Activated CD4-positive, alpha-beta memory T cell treated with anti-CD3 and anti-CD28 coated beads for 36 hours (primary cell): ENCODE measurements at regions of chr6 and their contacts with region 1.

Region 1: DNA sequence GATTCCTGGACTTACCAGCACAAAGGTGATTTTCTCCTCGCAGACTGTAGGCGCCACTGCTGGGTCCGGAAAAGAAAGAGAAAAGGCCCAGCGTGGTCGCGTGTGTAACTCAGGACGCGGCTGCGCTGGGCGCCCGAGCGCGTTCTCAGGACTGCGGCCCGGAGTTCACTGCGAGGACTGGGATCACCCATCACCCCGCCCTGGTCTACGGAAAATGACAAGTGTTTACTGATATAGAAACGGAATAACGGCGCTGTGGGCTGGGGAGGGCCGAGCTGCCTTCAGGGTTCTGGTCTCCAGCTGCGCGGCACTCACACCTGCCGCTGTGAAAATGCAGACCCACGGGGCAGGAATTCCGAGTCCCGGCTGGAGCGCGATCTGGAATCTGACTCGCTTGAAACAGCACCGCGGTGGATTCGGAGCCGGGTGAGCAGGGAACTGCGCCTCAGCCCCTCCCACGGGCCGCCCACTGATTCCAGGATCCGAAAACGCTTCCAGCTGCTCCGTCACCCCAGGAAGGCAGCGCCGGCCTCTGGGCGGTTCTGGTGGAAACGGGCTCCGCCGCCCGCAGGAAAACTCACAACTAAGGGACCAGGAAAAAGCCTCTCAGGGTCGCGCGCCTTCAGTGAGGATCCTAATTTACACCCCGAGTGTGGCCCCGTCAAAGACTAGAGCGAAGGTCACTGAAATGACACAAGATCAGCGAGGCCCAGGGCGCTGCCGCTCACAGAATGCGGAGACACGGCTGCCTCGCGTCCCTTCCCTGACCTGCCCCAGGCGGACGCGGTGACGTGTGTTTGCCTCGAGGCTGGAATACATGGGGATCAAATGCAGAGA is 34.5 kb downstream of the HLA-A start:
- DNase-seq: peak; percentile 73
- H3K4me3 Mint-ChIP-seq: peak overlapping the region; percentile 79
- H3K27ac Mint-ChIP-seq: no peak overlapping the region
- H3K4me1 Mint-ChIP-seq: peaks cover 24% of the 10 kb centered on the region
- H3K27me3 Mint-ChIP-seq: peaks cover 40% of the 10 kb centered on the region

Region 2: DNA sequence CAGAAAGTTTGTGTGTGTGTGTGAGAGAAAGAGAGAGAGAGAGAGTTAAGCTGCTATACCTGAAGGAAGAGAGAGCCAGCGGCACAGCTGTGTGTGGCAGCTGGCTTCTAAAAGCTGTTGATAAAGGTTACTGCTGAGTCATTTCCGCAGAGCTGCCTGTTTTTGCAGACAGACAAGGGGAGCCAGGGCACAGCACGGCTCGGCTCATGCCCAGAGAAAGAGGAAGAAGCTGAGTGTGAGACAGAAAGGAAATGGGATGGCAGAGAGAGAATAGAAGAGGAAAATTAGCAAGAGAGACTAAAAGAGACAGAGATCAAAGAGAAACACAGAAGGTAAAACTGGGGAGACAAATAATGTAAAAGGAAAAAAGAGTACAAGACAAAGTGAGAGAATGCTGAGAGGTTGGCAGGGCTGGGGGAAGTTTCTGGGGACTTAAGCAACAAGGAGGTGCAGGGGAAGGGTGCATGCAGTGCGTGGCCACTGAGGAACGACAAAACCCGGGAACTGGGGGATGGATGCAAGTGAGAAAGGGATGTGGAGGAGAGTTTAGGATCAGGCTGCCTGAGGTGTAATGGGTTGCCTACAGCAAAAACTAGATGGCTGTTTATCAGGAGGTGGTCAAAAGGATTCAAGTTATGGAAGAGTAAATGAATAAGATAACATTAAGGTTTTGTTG is 11.8 kb before region 1 on chr6:
- CTCF ChIA-PET with region 1: interaction called, 45 read pairs
- POLR2A ChIA-PET with region 1: interaction called, 6 read pairs
- intact Hi-C with region 1: loop called (anchors 1 kb)
- DNase-seq: peak; percentile 88
- H3K4me3 Mint-ChIP-seq: peak overlapping the region; percentile 82
- H3K27ac Mint-ChIP-seq: peak overlapping the region; percentile 95
- H3K4me1 Mint-ChIP-seq: peaks cover 43% of the 10 kb centered on the region
- H3K27me3 Mint-ChIP-seq: no peaks in the 10 kb centered on the region